ENCODE measurements at regions of chr3 and their contacts with region 1.

Region 1: DNA sequence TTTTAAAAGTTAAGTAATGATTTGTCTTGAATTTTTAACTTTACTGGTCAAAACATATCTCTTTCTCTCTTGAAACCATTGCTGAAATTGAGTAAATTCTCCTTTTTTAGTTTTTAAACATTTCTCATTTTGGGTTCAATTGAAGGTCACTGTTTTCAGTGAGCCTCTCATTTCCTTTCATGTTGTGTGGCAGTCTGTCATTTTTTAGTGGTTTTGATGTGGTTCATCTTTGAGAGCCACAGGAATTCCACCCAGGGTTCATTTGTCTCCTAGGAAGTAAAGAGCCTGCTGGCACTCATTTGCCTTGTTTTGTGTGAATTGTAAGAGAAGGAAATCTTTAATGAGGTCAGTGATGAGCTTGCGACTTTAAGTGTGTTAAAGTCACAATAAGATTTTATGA is 10.4 kb downstream of the CLDN11 start:
- DNase-seq: no peak
- ATAC-seq: peak; percentile 57
- H3K4me3 Mint-ChIP-seq: no peak overlapping the region
- H3K27ac Mint-ChIP-seq: no peak overlapping the region
- H3K4me1 Mint-ChIP-seq: peaks cover 18% of the 10 kb centered on the region
- H3K27me3 Mint-ChIP-seq: peaks cover 2% of the 10 kb centered on the region

Region 2: GRCh38 chr3:169966428-169966950 is 462.6 kb before region 1 on chr3 and contains the start of gene SEC62:
- CTCF ChIA-PET with region 1: no interaction called
- POLR2A ChIA-PET with region 1: no interaction called
- intact Hi-C with region 1: no loop called
- DNase-seq: peak; percentile 97
- ATAC-seq: peak; percentile 85
- H3K4me3 Mint-ChIP-seq: peak within 1 kb of the TSS; percentile 83
- H3K27ac Mint-ChIP-seq: peak within 1 kb of the TSS; percentile 95
- H3K4me1 Mint-ChIP-seq: peaks cover 62% of the 10 kb centered on the region
- H3K27me3 Mint-ChIP-seq: no peaks in the 10 kb centered on the region
- total RNA-seq, gene SEC62: 62.8 to 74.7 TPM

Region 3: DNA sequence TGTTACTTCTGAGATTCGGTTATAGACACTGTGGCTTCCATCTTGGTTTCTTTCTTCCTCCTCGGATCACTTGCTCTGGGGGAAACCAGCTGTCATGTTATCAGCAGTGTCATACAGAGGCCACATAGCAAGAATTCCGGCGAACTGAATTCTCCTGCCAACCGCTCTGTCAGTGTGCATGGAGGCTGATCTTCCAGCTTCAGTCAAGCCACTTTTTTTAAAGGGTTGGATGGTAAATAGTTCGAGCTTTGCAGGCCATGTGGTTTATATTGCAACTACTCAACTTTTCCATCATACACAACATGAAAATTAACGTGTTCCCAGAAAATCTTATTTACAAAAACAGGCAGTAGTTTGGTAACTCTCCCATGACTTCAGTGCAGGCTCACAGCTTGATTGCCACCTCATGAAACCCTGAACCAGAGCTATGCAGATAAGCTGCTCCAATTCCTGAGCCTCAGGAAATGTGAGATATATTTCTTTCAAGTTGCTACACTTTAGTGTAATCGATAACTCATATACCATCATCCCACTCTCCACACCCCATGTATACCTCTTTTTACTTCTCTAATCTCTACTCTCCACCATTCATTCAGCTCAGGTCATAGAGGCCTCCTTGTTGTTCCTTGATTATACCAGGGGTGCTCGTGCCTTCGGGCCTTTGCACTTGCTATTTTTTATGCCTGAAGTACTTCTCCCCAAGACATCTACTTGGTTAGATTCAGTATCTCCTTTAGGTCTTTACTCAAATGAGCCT is 433.7 kb after region 1 on chr3:
- CTCF ChIA-PET with region 1: no interaction called
- POLR2A ChIA-PET with region 1: no interaction called
- intact Hi-C with region 1: loop called in 1 of 2 experiments (anchors 5 kb)
- DNase-seq: no peak
- ATAC-seq: no peak
- H3K4me3 Mint-ChIP-seq: no peak overlapping the region
- H3K27ac Mint-ChIP-seq: no peak overlapping the region
- H3K4me1 Mint-ChIP-seq: peaks cover 13% of the 10 kb centered on the region
- H3K27me3 Mint-ChIP-seq: no peaks in the 10 kb centered on the region

Measured in activated CD4-positive, alpha-beta T cell treated with anti-CD3 and anti-CD28 coated beads for 36 hours (primary cell).